CD8-positive, alpha-beta T cell (primary cell): ENCODE measurements at regions of chr3 and their contacts with region 1.

Region 1: GRCh38 chr3:109806929-109807328 is 469.6 kb upstream of the DPPA4 start:
- DNase-seq: peak in 8 of 9 experiments; percentile 4 to 88 (median 44)
- ATAC-seq: peak; percentile 85
- H3K4me3 ChIP-seq: peak overlapping the region in 1 of 2 experiments; percentile 0
- H3K4me3 Mint-ChIP-seq: peak overlapping the region; percentile 60
- H3K27ac ChIP-seq: peak overlapping the region; percentile 39 to 72
- H3K27ac Mint-ChIP-seq: peak overlapping the region; percentile 91
- H3K4me1 ChIP-seq: peaks cover 43% of the 10 kb centered on the region
- H3K4me1 Mint-ChIP-seq: peaks cover 48% of the 10 kb centered on the region
- H3K27me3 ChIP-seq: no peaks in the 10 kb centered on the region
- H3K27me3 Mint-ChIP-seq: no peaks in the 10 kb centered on the region
- CTCF ChIP-seq: no peak

Region 2: DNA sequence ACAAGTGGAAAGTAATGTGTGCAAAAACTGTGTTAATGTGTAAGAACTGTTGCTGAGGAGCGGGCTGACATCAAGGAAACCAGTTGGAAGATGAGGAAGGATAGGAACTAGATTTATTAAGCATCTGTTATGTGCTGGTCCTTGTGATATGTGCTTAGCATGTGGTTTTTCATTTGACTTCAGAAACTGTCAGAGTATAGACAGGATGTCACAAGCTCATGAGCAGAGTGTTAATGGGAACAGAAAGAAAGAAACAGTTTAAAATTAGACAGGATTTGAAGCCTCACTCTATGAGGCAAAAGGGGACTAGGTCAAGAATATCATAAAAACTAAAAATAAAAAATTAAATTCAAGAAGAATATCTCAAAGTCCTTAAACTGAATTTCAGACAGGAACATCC is 199.0 kb before region 1 on chr3:
- CTCF ChIA-PET with region 1: no interaction called
- POLR2A ChIA-PET with region 1: no interaction called
- intact Hi-C with region 1: no loop called
- DNase-seq: no peak
- ATAC-seq: no peak
- H3K4me3 ChIP-seq: no peak overlapping the region
- H3K4me3 Mint-ChIP-seq: no peak overlapping the region
- H3K27ac ChIP-seq: no peak overlapping the region
- H3K27ac Mint-ChIP-seq: no peak overlapping the region
- H3K4me1 ChIP-seq: no peaks in the 10 kb centered on the region
- H3K4me1 Mint-ChIP-seq: no peaks in the 10 kb centered on the region
- H3K27me3 ChIP-seq: no peaks in the 10 kb centered on the region
- H3K27me3 Mint-ChIP-seq: no peaks in the 10 kb centered on the region
- CTCF ChIP-seq: no peak

Region 3: GRCh38 chr3:109731620-109732473 is 75.1 kb before region 1 on chr3:
- CTCF ChIA-PET with region 1: interaction called, 3 read pairs
- POLR2A ChIA-PET with region 1: interaction called, 3 read pairs
- intact Hi-C with region 1: loop called in 1 of 2 experiments (anchors 5 kb)
- DNase-seq: peak; percentile 16 to 77 (median 62)
- ATAC-seq: peak; percentile 91
- H3K4me3 ChIP-seq: no peak overlapping the region
- H3K4me3 Mint-ChIP-seq: no peak overlapping the region
- H3K27ac ChIP-seq: no peak overlapping the region
- H3K27ac Mint-ChIP-seq: no peak overlapping the region
- H3K4me1 ChIP-seq: peaks cover 6% of the 10 kb centered on the region
- H3K4me1 Mint-ChIP-seq: peaks cover 7% of the 10 kb centered on the region
- H3K27me3 ChIP-seq: no peaks in the 10 kb centered on the region
- H3K27me3 Mint-ChIP-seq: no peaks in the 10 kb centered on the region
- CTCF ChIP-seq: peak; percentile 100

Region 4: GRCh38 chr3:109772520-109772919 is 34.4 kb before region 1 on chr3:
- CTCF ChIA-PET with region 1: no interaction called
- POLR2A ChIA-PET with region 1: no interaction called
- intact Hi-C with region 1: loop called in 1 of 2 experiments (anchors 5 kb)
- DNase-seq: no peak
- ATAC-seq: no peak
- H3K4me3 ChIP-seq: no peak overlapping the region
- H3K4me3 Mint-ChIP-seq: no peak overlapping the region
- H3K27ac ChIP-seq: no peak overlapping the region
- H3K27ac Mint-ChIP-seq: no peak overlapping the region
- H3K4me1 ChIP-seq: peaks cover 9% of the 10 kb centered on the region
- H3K4me1 Mint-ChIP-seq: peaks cover 19% of the 10 kb centered on the region
- H3K27me3 ChIP-seq: no peaks in the 10 kb centered on the region
- H3K27me3 Mint-ChIP-seq: no peaks in the 10 kb centered on the region
- CTCF ChIP-seq: no peak

Region 5: GRCh38 chr3:109784852-109785631 is 21.9 kb before region 1 on chr3:
- CTCF ChIA-PET with region 1: interaction called, 4 read pairs
- POLR2A ChIA-PET with region 1: no interaction called
- intact Hi-C with region 1: loop called in 1 of 2 experiments (anchors 2 kb)
- DNase-seq: no peak
- ATAC-seq: no peak
- H3K4me3 ChIP-seq: no peak overlapping the region
- H3K4me3 Mint-ChIP-seq: no peak overlapping the region
- H3K27ac ChIP-seq: no peak overlapping the region
- H3K27ac Mint-ChIP-seq: no peak overlapping the region
- H3K4me1 ChIP-seq: no peaks in the 10 kb centered on the region
- H3K4me1 Mint-ChIP-seq: peaks cover 6% of the 10 kb centered on the region
- H3K27me3 ChIP-seq: no peaks in the 10 kb centered on the region
- H3K27me3 Mint-ChIP-seq: no peaks in the 10 kb centered on the region
- CTCF ChIP-seq: no peak

Region 6: DNA sequence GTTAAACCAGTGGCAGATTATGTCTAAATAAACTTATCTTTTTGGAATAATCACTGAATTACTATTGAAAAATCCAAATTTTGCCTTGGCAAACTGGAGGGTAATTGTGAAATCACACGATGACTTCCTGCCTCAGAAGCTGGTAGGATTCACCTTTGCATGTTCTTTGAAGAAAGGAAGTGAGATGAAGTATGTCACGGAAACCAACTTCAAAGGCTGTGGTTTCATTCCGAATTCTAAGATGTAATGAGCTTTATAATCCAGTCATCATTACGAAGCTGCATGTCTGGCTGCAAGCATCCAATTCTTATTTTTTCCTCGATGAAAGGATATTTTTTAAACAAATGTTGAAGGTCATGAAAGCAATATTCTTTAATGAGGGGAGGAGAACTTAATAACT is 1803.3 kb after region 1 on chr3:
- CTCF ChIA-PET with region 1: no interaction called
- POLR2A ChIA-PET with region 1: no interaction called
- intact Hi-C with region 1: loop called in 1 of 2 experiments (anchors 5 kb)
- DNase-seq: peak in 6 of 9 experiments; percentile 16 to 92 (median 46)
- ATAC-seq: peak; percentile 79
- H3K4me3 ChIP-seq: no peak overlapping the region
- H3K4me3 Mint-ChIP-seq: peak overlapping the region; percentile 64
- H3K27ac ChIP-seq: peak overlapping the region; percentile 14 to 77
- H3K27ac Mint-ChIP-seq: peak overlapping the region; percentile 94
- H3K4me1 ChIP-seq: peaks cover 43% of the 10 kb centered on the region
- H3K4me1 Mint-ChIP-seq: peaks cover 70% of the 10 kb centered on the region
- H3K27me3 ChIP-seq: no peaks in the 10 kb centered on the region
- H3K27me3 Mint-ChIP-seq: no peaks in the 10 kb centered on the region
- CTCF ChIP-seq: no peak